ENCODE measurements at regions of chr10 and their contacts with region 1.

Region 1: GRCh38 chr10:91590904-91591796 is 41.7 kb downstream of the PPP1R3C start:
- DNase-seq: peak; percentile 61
- H3K4me3 ChIP-seq: no peak overlapping the region
- H3K27me3 ChIP-seq: no peaks in the 10 kb centered on the region
- CTCF ChIP-seq: no peak

Region 2: GRCh38 chr10:91613411-91614253 is 22.5 kb after region 1 on chr10:
- CTCF ChIA-PET with region 1: interaction called, 6 read pairs
- POLR2A ChIA-PET with region 1: interaction called, 18 read pairs
- DNase-seq: peak; percentile 99
- H3K4me3 ChIP-seq: no peak overlapping the region
- H3K27me3 ChIP-seq: no peaks in the 10 kb centered on the region
- CTCF ChIP-seq: no peak

Region 3: GRCh38 chr10:91664426-91664825 is 73.3 kb after region 1 on chr10:
- CTCF ChIA-PET with region 1: no interaction called
- POLR2A ChIA-PET with region 1: no interaction called
- DNase-seq: no peak
- H3K4me3 ChIP-seq: no peak overlapping the region
- H3K27me3 ChIP-seq: no peaks in the 10 kb centered on the region
- CTCF ChIP-seq: no peak

Region 4: DNA sequence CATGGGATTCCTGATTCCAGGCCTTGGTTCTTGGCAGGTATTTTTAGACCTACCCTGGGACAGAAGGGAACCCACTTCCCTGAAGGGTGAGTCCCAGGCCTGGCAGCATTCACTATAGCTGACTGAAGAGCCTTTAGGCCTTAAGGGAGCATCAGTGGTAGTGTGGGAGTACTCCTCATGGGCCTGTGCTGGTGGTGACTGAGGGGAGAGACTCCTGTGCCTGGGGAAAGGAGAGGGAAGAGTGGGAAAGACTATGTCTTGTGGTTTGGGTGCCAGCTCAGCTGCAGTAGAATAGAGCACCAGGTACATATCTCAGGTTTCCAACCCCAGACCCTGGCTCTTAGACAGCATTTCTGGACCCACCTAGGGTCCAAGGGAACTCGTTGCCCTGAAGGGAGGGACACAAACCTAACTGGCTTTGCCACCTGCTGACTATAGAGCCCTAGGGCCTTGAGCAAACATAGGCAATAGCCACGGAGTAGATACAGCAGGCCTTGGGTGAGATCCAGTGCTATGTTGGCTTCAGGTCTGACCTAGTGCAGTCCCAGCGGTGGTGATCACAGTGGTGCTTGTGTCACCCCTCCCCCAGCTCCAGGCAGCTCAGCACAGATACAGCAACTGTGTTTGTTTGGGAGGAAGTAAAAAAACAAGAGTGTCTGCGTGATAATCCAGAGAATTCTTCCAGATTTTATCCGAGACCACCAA is 197.2 kb after region 1 on chr10:
- CTCF ChIA-PET with region 1: no interaction called
- POLR2A ChIA-PET with region 1: no interaction called
- DNase-seq: no peak
- H3K4me3 ChIP-seq: no peak overlapping the region
- H3K27me3 ChIP-seq: no peaks in the 10 kb centered on the region
- CTCF ChIP-seq: no peak

Measured in BJ (cell line).